Prostate gland (tissue), 2 donors: ENCODE measurements at regions of chr19 and their contacts with region 1.

Region 1: GRCh38 chr19:8363803-8364771 is at the start of gene ANGPTL4:
- DNase-seq: peak; percentile 75
- H3K4me3 ChIP-seq: peak within 1 kb of the TSS; percentile 36 to 60
- H3K27ac ChIP-seq: peak within 1 kb of the TSS; percentile 69 to 80
- H3K4me1 ChIP-seq: peaks cover 10% of the 10 kb centered on the region
- H3K27me3 ChIP-seq: no peaks in the 10 kb centered on the region
- CTCF ChIP-seq: peak in 2 of 4 experiments; percentile 12 to 46
- POLR2A ChIP-seq: peak; percentile 86
- total RNA-seq, gene ANGPTL4: 25.7 to 26.4 TPM

Region 2: GRCh38 chr19:8233370-8233769 is 130.7 kb before region 1 on chr19:
- intact Hi-C with region 1: no loop called
- DNase-seq: no peak
- H3K4me3 ChIP-seq: no peak overlapping the region
- H3K27ac ChIP-seq: no peak overlapping the region
- H3K4me1 ChIP-seq: no peaks in the 10 kb centered on the region
- H3K27me3 ChIP-seq: no peaks in the 10 kb centered on the region
- CTCF ChIP-seq: no peak
- POLR2A ChIP-seq: no peak

Region 3: GRCh38 chr19:8389891-8390616 is 26.0 kb after region 1 on chr19 and contains the start of gene RAB11B:
- intact Hi-C with region 1: loop called (anchors 2 kb)
- DNase-seq: peak; percentile 100
- H3K4me3 ChIP-seq: peak within 1 kb of the TSS; percentile 100
- H3K27ac ChIP-seq: peak within 1 kb of the TSS; percentile 99 to 100
- H3K4me1 ChIP-seq: peaks cover 15% of the 10 kb centered on the region
- H3K27me3 ChIP-seq: no peaks in the 10 kb centered on the region
- CTCF ChIP-seq: no peak
- POLR2A ChIP-seq: peak; percentile 63
- total RNA-seq, gene RAB11B: 60.7 to 103 TPM

Region 4: DNA sequence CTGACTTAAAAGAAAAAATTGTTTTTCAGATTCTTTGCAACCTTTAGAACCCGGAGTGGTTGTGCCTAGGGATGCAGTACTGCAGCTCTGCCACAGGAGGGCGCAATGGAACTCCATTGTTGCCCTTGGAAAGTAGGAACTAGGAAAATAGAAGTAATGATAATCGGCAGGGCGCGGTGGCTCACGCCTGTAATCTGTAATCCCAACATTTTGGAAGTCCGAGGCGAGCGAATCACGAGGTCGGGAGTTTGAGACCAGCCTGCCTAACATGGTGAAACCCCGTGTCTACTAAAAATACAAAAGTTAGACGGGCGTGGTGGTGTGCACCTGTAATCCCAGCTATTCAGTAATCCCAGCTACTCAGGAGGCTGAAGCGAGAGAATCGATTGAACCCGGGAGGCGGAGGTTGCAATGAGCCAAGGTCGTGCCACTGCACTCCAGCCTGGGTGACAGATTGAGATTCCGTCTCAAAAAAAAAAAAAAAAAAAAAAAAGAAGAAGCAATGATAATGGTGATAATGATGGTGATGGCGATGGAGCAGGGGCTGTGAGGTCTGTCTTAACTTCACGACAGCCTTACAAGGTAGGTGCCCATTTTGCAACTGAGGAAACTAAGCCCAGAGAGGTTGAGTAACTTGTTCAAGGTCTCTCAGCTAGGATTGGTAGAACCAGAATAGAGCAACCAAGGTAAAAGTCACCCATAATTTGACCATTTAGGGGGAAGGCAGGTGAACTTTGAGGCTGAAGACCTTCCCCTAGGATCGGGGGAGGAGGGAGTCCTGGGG is 251.9 kb after region 1 on chr19:
- intact Hi-C with region 1: no loop called
- DNase-seq: no peak
- H3K4me3 ChIP-seq: no peak overlapping the region
- H3K27ac ChIP-seq: no peak overlapping the region
- H3K4me1 ChIP-seq: no peaks in the 10 kb centered on the region
- H3K27me3 ChIP-seq: no peaks in the 10 kb centered on the region
- CTCF ChIP-seq: peak; percentile 45 to 70 (median 58)
- POLR2A ChIP-seq: no peak